ENCODE measurements at regions of chr14 and their contacts with region 1.

Region 1: DNA sequence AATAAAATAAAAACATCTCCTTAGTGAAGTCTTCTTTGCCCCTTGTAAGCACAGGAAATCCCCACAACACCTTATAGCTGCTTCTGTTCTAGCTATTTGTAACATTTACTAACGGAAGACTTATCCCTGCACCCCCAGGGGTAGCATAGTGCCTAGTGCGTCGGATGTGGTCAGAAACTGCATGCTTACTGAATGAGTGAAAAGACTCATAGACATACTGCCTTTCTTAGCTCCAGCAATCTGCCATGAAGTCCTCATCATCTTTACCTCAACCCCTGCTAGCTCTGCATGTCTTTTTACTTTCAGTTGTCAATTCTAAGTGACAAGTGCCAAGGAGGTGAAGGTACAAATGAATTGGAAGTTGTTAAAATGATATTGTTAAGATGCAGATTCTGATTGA is 12.9 kb downstream of the RIOX1 start:
- DNase-seq: no peak

Region 2: GRCh38 chr14:73397810-73398209 is 105.8 kb before region 1 on chr14:
- intact Hi-C with region 1: no loop called
- DNase-seq: no peak

Region 3: DNA sequence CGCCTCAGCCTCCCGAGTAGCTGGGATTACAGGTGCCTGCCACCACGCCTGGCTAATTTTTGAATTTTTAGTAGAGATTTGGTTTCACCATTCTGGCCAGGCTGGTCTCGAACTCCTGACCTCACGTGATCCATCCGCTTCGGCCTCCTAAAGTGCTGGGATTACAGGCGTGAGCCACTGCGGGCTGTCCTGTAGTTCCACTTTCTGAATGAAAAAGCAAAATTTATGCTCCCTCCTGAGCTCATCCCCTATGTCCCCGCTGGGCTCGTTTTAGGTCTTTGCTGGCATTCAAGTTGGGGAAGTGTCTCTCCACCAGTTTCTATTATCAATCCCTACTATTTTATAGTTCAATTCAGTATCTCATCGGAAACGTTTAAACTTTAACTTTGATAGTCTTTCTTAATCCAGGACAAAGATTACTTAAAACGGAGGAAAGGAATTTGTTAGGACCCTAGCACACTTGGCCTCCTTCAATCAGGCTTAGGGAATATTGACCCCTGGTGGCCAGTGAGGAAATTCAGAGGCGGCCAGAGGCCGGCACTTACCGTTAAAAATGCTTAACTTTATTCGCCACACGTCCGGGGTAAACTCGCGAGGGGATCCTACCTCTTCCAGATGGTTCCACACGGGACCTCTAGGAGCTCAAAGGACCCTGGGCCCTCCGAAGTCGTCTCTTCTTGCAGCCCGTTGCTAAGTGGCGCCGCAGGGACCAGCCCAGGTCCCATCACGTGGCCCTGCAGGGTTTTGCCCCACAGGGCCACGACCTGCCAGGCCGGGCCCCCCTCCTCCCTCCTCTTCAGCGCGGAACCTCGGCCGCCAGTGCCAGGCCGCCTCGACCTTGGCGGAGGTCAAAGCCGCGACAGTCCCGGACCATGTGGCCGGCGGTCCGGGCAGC is 129.7 kb after region 1 on chr14:
- intact Hi-C with region 1: loop called (anchors 2 kb)
- DNase-seq: peak; percentile 34 to 93 (median 64)